OCI-LY7 (cell line): ENCODE measurements at regions of chr6 and their contacts with region 1.

Region 1: DNA sequence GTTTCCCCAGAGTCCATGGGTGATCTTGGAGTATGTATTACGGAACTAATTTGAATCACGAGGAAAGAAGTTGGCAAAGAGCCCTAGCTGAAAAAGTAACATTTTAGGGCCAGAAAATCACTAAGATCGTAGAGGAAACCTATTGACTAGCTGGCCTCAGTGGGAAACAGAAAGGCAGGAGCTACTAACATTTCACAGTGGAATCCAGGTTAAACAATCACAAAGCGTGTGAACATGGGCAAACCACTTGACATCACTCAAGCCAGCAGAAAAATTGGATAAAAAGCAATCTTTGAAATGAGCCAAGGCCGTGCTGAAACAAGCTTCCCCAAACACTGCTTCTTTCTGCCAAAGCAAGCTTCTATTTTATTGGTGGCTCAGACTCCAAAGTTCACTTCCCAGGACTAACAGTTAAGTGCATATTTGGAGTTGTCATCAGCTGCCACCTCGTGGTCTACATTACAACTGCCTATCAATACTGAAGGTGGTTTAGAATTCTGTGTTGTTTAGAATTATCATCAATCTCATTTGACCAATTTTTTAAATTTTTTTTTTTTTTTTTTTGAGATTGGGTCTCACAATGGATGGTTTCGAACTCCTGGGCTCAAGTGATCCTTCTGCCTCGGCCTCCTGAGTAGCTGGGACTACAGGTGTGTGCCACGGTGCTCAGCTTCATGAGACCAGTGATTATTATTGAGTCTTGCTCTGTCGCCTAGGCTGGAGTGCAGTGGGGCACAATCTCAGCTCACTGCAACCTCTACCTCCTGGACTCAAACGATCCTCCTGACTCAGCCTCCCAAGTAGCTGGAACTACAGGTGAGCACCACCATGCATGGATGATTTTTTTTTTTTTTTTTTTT is 10.6 kb downstream of the RPS10 start:
- DNase-seq: peak; percentile 69
- H3K4me3 ChIP-seq: no peak overlapping the region
- H3K27ac ChIP-seq: no peak overlapping the region
- H3K4me1 ChIP-seq: no peaks in the 10 kb centered on the region
- CTCF ChIP-seq: peak; percentile 82

Region 2: DNA sequence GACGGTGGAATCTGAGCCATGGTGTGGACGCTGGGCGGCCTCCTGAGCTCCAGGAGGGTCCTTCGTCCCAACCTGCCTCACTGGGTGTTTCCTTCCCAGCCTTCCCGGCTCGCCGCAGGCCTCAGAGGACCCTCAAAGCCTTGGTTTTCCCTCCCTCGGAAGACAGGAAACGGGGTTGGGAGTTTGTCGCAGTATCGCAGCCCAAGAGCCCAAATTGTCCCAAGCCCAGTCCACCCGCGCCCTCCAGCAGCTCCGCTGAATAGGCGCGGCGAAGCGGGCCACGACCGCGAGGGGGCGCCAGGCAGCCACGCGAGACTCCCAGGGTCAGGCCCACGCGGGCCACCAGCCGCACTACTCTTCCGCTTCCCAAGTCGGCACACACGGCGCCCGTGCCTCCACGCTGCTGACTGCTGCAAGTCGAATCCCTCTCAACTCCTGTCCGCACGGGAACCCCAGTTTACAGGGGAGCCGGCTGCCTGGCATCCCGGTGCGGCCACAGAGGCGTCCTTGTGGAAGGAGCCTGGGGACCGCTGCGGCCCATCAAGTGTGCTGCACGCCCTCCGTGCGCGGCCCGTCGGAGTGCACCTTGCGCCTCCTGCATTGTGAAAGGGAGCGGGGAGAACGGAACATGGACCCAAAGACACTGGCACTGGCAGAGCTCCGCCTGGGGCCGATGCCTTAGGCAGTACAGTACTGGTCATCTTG is 219.0 kb before region 1 on chr6:
- CTCF ChIA-PET with region 1: no interaction called
- POLR2A ChIA-PET with region 1: no interaction called
- intact Hi-C with region 1: loop called (anchors 2 kb)
- DNase-seq: peak; percentile 79
- H3K4me3 ChIP-seq: peak overlapping the region; percentile 43
- H3K27ac ChIP-seq: no peak overlapping the region
- H3K4me1 ChIP-seq: peaks cover 7% of the 10 kb centered on the region
- CTCF ChIP-seq: peak; percentile 90

Region 3: GRCh38 chr6:34425498-34426410 is 10.5 kb after region 1 on chr6 and contains the start of gene RPS10:
- CTCF ChIA-PET with region 1: no interaction called
- POLR2A ChIA-PET with region 1: interaction called, 14 read pairs
- intact Hi-C with region 1: no loop called
- DNase-seq: peak; percentile 93
- H3K4me3 ChIP-seq: peak within 1 kb of the TSS; percentile 97
- H3K27ac ChIP-seq: peak within 1 kb of the TSS; percentile 70
- H3K4me1 ChIP-seq: peaks cover 21% of the 10 kb centered on the region
- CTCF ChIP-seq: no peak
- total RNA-seq, gene RPS10: 2,738 and 2,938 TPM in 2 replicates